CD4-positive, alpha-beta T cell (primary cell): ENCODE measurements at regions of chr14 and their contacts with region 1.

Region 1: GRCh38 chr14:65412032-65412846 is at the start of gene FUT8:
- DNase-seq: peak; percentile 89 to 98 (median 96)
- ATAC-seq: peak; percentile 88
- H3K4me3 ChIP-seq: peak within 1 kb of the TSS; percentile 74
- H3K4me3 Mint-ChIP-seq: peak within 1 kb of the TSS; percentile 99
- H3K27ac ChIP-seq: peak within 1 kb of the TSS; percentile 51 to 75
- H3K27ac Mint-ChIP-seq: peak within 1 kb of the TSS; percentile 92
- H3K4me1 ChIP-seq: peaks cover 11% of the 10 kb centered on the region
- H3K4me1 Mint-ChIP-seq: peaks cover 51% of the 10 kb centered on the region
- H3K27me3 ChIP-seq: no peaks in the 10 kb centered on the region
- H3K27me3 Mint-ChIP-seq: no peaks in the 10 kb centered on the region
- CTCF ChIP-seq: peak; percentile 63
- total RNA-seq, gene FUT8: 31.3 to 39.1 TPM

Region 2: DNA sequence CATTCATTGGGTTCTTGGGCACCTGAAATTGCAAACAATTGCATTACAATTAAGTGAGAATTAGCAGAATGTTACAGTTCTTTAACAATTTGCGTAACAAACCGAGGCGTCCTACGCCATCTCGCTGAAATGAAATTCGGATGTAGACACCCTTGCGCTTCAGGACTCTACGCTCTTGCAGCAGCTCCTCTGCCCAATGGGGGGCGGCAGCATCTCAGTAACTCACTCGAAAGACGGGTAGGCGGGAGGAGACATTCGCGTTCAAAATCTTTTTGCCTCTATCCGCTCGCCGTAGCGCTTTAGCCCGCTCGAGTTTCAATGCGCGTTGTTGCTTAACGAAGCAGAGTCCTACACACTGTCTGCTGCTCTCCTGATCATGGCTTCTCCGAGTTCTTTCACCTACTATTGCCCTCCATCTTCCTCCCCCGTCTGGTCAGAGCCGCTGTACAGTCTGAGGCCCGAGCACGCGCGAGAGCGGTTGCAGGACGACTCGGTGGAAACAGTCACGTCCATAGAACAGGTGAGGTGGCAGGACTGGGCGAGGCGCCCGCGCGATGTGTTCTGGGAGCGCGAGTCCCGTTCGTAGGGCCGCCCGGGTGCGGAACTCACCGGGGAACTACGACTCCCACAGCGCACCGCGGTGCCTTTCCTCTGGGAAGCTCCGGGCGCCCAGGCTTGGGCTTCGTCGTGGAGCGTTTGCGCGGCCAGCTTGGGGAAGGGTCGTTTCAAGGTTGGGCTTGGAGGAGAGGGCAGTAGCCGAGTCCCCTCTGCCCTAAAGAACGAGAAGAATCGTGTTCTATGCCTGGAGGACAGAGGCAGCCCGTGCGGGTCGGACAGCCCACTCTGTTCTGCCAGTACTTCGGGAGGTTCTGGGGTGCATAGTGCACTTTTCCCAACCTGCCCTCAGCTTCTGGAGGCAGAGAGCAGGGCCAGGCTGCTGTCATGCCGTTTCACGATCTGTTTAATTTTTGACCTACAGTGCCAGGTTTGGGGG is 425.4 kb before region 1 on chr14 and contains the start of gene FNTB:
- CTCF ChIA-PET with region 1: interaction called, 6 read pairs
- POLR2A ChIA-PET with region 1: interaction called, 6 read pairs
- intact Hi-C with region 1: loop called (anchors 5 kb)
- DNase-seq: peak; percentile 83 to 97 (median 88)
- ATAC-seq: peak; percentile 89
- H3K4me3 ChIP-seq: peak within 1 kb of the TSS; percentile 84
- H3K4me3 Mint-ChIP-seq: peak within 1 kb of the TSS; percentile 97
- H3K27ac ChIP-seq: peak within 1 kb of the TSS; percentile 52 to 69
- H3K27ac Mint-ChIP-seq: peak within 1 kb of the TSS; percentile 91
- H3K4me1 ChIP-seq: peaks cover 50% of the 10 kb centered on the region
- H3K4me1 Mint-ChIP-seq: peaks cover 62% of the 10 kb centered on the region
- H3K27me3 ChIP-seq: no peaks in the 10 kb centered on the region
- H3K27me3 Mint-ChIP-seq: no peaks in the 10 kb centered on the region
- CTCF ChIP-seq: peak; percentile 90
- total RNA-seq, gene FNTB: 7.5 to 7.9 TPM

Region 3: DNA sequence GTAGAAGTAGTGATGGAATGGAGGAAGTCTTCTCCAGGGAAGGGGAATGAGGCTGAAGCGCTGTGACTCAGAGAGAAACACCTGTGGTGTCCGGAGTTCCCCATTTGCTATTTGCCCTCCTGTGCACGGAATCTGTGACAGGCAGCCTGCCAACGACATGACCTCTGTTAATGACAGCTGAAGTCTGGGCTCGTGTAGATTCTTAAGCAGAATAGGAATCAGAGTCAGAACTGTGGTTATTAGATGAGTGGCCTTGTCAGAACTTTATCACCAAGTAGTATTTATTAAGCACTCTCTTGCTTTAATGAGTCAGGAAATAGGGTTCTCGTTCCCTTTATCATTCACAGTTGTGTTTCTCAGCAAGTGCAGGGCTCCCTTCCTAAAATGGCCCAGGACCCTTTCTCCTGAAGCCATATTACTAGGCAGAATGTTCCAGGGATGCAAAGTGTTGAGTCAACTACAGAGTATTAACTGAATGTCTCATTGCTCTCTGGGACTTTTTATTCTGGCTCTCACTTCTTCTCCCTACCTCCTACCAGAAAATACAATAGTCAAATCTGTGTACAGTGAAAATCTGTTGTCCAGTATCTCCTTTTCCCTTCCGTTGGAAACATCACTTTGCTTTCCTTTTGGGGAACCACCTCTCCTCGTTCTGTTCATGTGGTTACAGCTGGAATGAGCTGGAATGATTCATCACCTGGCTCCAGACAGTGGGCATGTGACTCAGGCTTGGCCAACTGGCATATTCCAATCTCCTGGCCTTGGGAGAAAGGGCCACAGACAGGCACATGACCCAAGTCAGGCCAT is 232.1 kb before region 1 on chr14:
- CTCF ChIA-PET with region 1: no interaction called
- POLR2A ChIA-PET with region 1: no interaction called
- intact Hi-C with region 1: no loop called
- DNase-seq: peak in 4 of 14 experiments; percentile 27 to 58 (median 46)
- ATAC-seq: no peak
- H3K4me3 ChIP-seq: no peak overlapping the region
- H3K4me3 Mint-ChIP-seq: no peak overlapping the region
- H3K27ac ChIP-seq: no peak overlapping the region
- H3K27ac Mint-ChIP-seq: no peak overlapping the region
- H3K4me1 ChIP-seq: no peaks in the 10 kb centered on the region
- H3K4me1 Mint-ChIP-seq: peaks cover 8% of the 10 kb centered on the region
- H3K27me3 ChIP-seq: no peaks in the 10 kb centered on the region
- H3K27me3 Mint-ChIP-seq: no peaks in the 10 kb centered on the region
- CTCF ChIP-seq: no peak

Region 4: GRCh38 chr14:65206448-65207096 is 205.7 kb before region 1 on chr14:
- CTCF ChIA-PET with region 1: interaction called, 3 read pairs
- POLR2A ChIA-PET with region 1: interaction called, 18 read pairs
- intact Hi-C with region 1: no loop called
- DNase-seq: peak in 4 of 14 experiments; percentile 15 to 61 (median 46)
- ATAC-seq: peak; percentile 41
- H3K4me3 ChIP-seq: no peak overlapping the region
- H3K4me3 Mint-ChIP-seq: peak overlapping the region; percentile 83
- H3K27ac ChIP-seq: peak overlapping the region in 1 of 2 donors; percentile 39
- H3K27ac Mint-ChIP-seq: peak overlapping the region; percentile 86
- H3K4me1 ChIP-seq: peaks cover 59% of the 10 kb centered on the region
- H3K4me1 Mint-ChIP-seq: peaks cover 60% of the 10 kb centered on the region
- H3K27me3 ChIP-seq: no peaks in the 10 kb centered on the region
- H3K27me3 Mint-ChIP-seq: no peaks in the 10 kb centered on the region
- CTCF ChIP-seq: no peak

Region 5: GRCh38 chr14:65281991-65282895 is 130.0 kb before region 1 on chr14:
- CTCF ChIA-PET with region 1: interaction called, 11 read pairs
- POLR2A ChIA-PET with region 1: interaction called, 40 read pairs
- intact Hi-C with region 1: loop called in 1 of 2 experiments (anchors 2 kb)
- DNase-seq: peak in 4 of 14 experiments; percentile 32 to 55 (median 35)
- ATAC-seq: peak; percentile 32
- H3K4me3 ChIP-seq: peak overlapping the region; percentile 17
- H3K4me3 Mint-ChIP-seq: peak overlapping the region; percentile 70
- H3K27ac ChIP-seq: peak overlapping the region; percentile 15 to 25
- H3K27ac Mint-ChIP-seq: peak overlapping the region; percentile 84
- H3K4me1 ChIP-seq: peaks cover 32% of the 10 kb centered on the region
- H3K4me1 Mint-ChIP-seq: peaks cover 34% of the 10 kb centered on the region
- H3K27me3 ChIP-seq: no peaks in the 10 kb centered on the region
- H3K27me3 Mint-ChIP-seq: no peaks in the 10 kb centered on the region
- CTCF ChIP-seq: no peak

Region 6: GRCh38 chr14:65486868-65487267 is 74.6 kb after region 1 on chr14:
- CTCF ChIA-PET with region 1: no interaction called
- POLR2A ChIA-PET with region 1: no interaction called
- intact Hi-C with region 1: no loop called
- DNase-seq: no peak
- ATAC-seq: no peak
- H3K4me3 ChIP-seq: no peak overlapping the region
- H3K4me3 Mint-ChIP-seq: no peak overlapping the region
- H3K27ac ChIP-seq: no peak overlapping the region
- H3K27ac Mint-ChIP-seq: no peak overlapping the region
- H3K4me1 ChIP-seq: peaks cover 4% of the 10 kb centered on the region
- H3K4me1 Mint-ChIP-seq: peaks cover 78% of the 10 kb centered on the region
- H3K27me3 ChIP-seq: no peaks in the 10 kb centered on the region
- H3K27me3 Mint-ChIP-seq: no peaks in the 10 kb centered on the region
- CTCF ChIP-seq: no peak

Region 7: GRCh38 chr14:65847075-65847847 is 435.0 kb after region 1 on chr14:
- CTCF ChIA-PET with region 1: interaction called, 6 read pairs
- POLR2A ChIA-PET with region 1: interaction called, 23 read pairs
- intact Hi-C with region 1: no loop called
- DNase-seq: peak; percentile 43 to 95 (median 66)
- ATAC-seq: peak; percentile 81
- H3K4me3 ChIP-seq: peak overlapping the region; percentile 33
- H3K4me3 Mint-ChIP-seq: peak overlapping the region; percentile 62
- H3K27ac ChIP-seq: peak overlapping the region; percentile 83 to 87
- H3K27ac Mint-ChIP-seq: peak overlapping the region; percentile 91
- H3K4me1 ChIP-seq: peaks cover 78% of the 10 kb centered on the region
- H3K4me1 Mint-ChIP-seq: peaks cover 93% of the 10 kb centered on the region
- H3K27me3 ChIP-seq: no peaks in the 10 kb centered on the region
- H3K27me3 Mint-ChIP-seq: no peaks in the 10 kb centered on the region
- CTCF ChIP-seq: no peak

Region 8: GRCh38 chr14:66507722-66508546 is 1095.7 kb after region 1 on chr14 and contains the start of gene GPHN:
- CTCF ChIA-PET with region 1: no interaction called
- POLR2A ChIA-PET with region 1: no interaction called
- intact Hi-C with region 1: loop called in 1 of 2 experiments (anchors 5 kb)
- DNase-seq: peak; percentile 71 to 95 (median 82)
- ATAC-seq: peak; percentile 89
- H3K4me3 ChIP-seq: peak within 1 kb of the TSS; percentile 90
- H3K4me3 Mint-ChIP-seq: peak within 1 kb of the TSS; percentile 99
- H3K27ac ChIP-seq: peak within 1 kb of the TSS; percentile 14 to 48
- H3K27ac Mint-ChIP-seq: peak within 1 kb of the TSS; percentile 94
- H3K4me1 ChIP-seq: peaks cover 19% of the 10 kb centered on the region
- H3K4me1 Mint-ChIP-seq: peaks cover 41% of the 10 kb centered on the region
- H3K27me3 ChIP-seq: no peaks in the 10 kb centered on the region
- H3K27me3 Mint-ChIP-seq: no peaks in the 10 kb centered on the region
- CTCF ChIP-seq: no peak
- total RNA-seq, gene GPHN: 10.0 to 10.7 TPM